Heart right ventricle (tissue), 16 donors: ENCODE measurements at regions of chr17 and their contacts with region 1.

Region 1: DNA sequence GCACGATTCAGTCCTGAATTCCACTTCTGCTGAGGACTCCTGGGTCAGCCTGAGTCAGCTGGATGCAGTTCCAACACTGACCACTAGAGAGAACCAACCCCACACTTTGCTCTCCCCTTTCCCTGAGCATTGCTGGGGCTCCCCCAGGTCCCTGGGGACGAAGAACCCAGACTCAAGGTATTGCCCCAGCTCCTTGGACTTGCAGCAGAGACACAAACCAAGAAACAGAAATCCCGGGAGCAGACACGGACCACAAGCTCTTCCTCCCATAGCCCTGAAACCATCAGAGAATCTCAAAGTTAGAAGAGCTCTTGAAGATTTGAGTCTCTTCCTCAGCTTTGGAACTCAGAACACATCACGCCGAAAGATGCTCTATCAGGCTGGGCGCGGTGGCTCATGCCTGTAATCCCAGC is 678 bp upstream of the GH1 start:
- DNase-seq: peak in 1 of 2 donors; percentile 51
- ATAC-seq: peak; percentile 81 to 91 (median 87)
- H3K4me3 ChIP-seq: no peak overlapping the region
- H3K27ac ChIP-seq: no peak overlapping the region
- H3K4me1 ChIP-seq: peaks cover 0 to 10% (median 0%) of the 10 kb centered on the region in 9 donors
- H3K27me3 ChIP-seq: peaks cover 0 to 6% (median 0%) of the 10 kb centered on the region in 7 donors
- CTCF ChIP-seq: peak; percentile 88 to 97 (median 92)

Region 2: GRCh38 chr17:63931099-63931561 is 11.8 kb after region 1 on chr17:
- intact Hi-C with region 1: no loop called
- DNase-seq: peak; percentile 77 to 84
- ATAC-seq: peak; percentile 85 to 96 (median 89)
- H3K4me3 ChIP-seq: peak overlapping the region in 9 of 10 donors; percentile 13 to 48 (median 39)
- H3K27ac ChIP-seq: peak overlapping the region; percentile 65 to 88 (median 76)
- H3K4me1 ChIP-seq: peaks cover 0 to 30% (median 24%) of the 10 kb centered on the region in 9 donors
- H3K27me3 ChIP-seq: peaks cover 0 to 2% (median 0%) of the 10 kb centered on the region in 7 donors
- CTCF ChIP-seq: no peak

Region 3: GRCh38 chr17:63946440-63947367 is 27.4 kb after region 1 on chr17:
- intact Hi-C with region 1: loop called in 1 of 10 experiments (anchors 2 kb)
- DNase-seq: peak; percentile 35 to 54
- ATAC-seq: peak in 7 of 8 donors; percentile 70 to 81 (median 77)
- H3K4me3 ChIP-seq: no peak overlapping the region
- H3K27ac ChIP-seq: peak overlapping the region in 2 of 10 donors; percentile 29 to 36
- H3K4me1 ChIP-seq: peaks cover 0 to 20% (median 2%) of the 10 kb centered on the region in 9 donors
- H3K27me3 ChIP-seq: peaks cover 0 to 7% (median 0%) of the 10 kb centered on the region in 7 donors
- CTCF ChIP-seq: peak; percentile 64 to 89 (median 83)

Region 4: DNA sequence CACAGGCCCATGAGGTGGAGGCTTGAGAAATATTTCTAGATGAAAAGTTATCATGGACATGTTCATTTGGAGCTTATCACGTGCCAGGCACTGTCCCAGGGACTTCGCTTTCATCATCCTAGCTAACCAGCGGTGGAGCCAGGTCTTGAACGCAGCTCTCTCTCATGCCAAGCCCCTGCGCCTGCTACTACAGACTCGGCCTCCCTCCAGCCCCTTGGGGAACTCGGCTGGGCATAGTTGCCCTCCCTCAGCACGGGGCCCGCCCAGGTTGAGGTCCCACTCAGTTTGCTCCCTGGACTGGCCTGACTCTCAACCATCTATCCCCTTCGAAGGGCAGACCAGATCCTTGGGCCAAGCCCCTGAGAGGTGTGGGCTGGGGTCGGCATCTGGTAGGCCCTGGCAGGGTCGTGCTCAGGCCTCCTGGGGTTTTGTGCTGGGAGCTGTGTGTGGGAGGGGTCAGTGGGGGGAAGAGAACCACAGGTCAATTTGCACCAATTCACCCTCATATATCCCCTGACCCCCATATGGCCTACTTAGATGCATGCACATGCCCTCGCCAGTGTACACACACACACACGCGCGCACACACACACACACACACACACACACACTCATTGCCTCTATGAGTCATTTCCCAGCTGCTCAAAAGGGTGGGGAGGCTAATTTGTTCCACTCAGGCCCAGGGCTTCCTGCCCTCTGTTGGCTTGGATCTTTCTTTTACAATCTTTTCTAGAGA is 65.5 kb after region 1 on chr17:
- intact Hi-C with region 1: loop called in 7 of 10 experiments (anchors 1 to 5 kb)
- DNase-seq: peak; percentile 52 to 76
- ATAC-seq: peak; percentile 65 to 88 (median 81)
- H3K4me3 ChIP-seq: no peak overlapping the region
- H3K27ac ChIP-seq: peak overlapping the region; percentile 44 to 88 (median 78)
- H3K4me1 ChIP-seq: peaks cover 24 to 86% (median 61%) of the 10 kb centered on the region in 9 donors
- H3K27me3 ChIP-seq: peaks cover 0 to 3% (median 0%) of the 10 kb centered on the region in 7 donors
- CTCF ChIP-seq: peak in 1 of 9 donors; percentile 6

Region 5: DNA sequence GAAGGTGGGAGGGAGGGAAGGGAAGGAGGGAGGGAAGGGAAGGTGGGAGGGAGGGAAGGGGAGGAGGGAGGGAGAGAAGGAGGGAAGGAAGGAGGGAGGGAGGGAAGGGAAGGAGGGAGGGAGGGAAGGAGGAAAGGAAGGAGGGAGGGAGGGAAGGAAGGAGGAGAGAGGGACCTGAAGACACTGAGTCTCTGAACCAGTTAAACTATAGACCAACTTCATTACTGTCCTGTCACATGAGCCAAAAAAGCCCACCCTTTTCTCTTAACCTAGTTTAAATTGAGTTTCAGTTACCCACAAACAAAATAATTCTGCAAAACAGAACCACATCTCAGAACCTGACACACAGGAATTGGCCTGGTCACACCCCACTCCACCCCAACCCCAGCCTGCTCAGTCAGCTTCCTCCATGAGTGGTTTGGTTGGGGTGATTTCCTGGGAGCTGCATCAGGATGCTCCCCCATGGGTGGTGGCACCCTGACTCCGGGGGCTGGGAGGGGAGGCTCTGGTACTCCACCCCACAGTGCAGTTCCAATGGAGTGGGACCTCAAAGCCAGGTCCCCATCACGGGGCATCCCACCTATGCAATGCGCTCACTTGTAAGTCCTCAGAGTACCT is 74.2 kb after region 1 on chr17:
- intact Hi-C with region 1: loop called in 7 of 10 experiments (anchors 1 to 5 kb)
- DNase-seq: no peak
- ATAC-seq: no peak
- H3K4me3 ChIP-seq: no peak overlapping the region
- H3K27ac ChIP-seq: no peak overlapping the region
- H3K4me1 ChIP-seq: peaks cover 10 to 47% (median 24%) of the 10 kb centered on the region in 9 donors
- H3K27me3 ChIP-seq: peaks cover 0 to 43% (median 19%) of the 10 kb centered on the region in 7 donors
- CTCF ChIP-seq: no peak

Region 6: GRCh38 chr17:64020056-64020766 is 100.9 kb after region 1 on chr17 and contains the start of gene ICAM2:
- intact Hi-C with region 1: loop called in 9 of 10 experiments (anchors 1 to 10 kb)
- DNase-seq: peak; percentile 63 to 85
- ATAC-seq: peak; percentile 85 to 96 (median 93)
- H3K4me3 ChIP-seq: peak within 1 kb of the TSS; percentile 23 to 70 (median 58)
- H3K27ac ChIP-seq: peak within 1 kb of the TSS; percentile 75 to 97 (median 86)
- H3K4me1 ChIP-seq: peaks cover 0 to 62% (median 26%) of the 10 kb centered on the region in 9 donors
- H3K27me3 ChIP-seq: no peaks in the 10 kb centered on the region
- CTCF ChIP-seq: no peak
- total RNA-seq, gene ICAM2: 25.2 to 70.2 (median 32.4) TPM

Region 7: GRCh38 chr17:64025732-64026294 is 106.5 kb after region 1 on chr17:
- intact Hi-C with region 1: loop called in 9 of 10 experiments (anchors 1 to 10 kb)
- DNase-seq: peak; percentile 80 to 81
- ATAC-seq: peak in 7 of 8 donors; percentile 69 to 85 (median 82)
- H3K4me3 ChIP-seq: peak overlapping the region in 5 of 10 donors; percentile 14 to 32 (median 26)
- H3K27ac ChIP-seq: peak overlapping the region in 7 of 10 donors; percentile 4 to 97 (median 66)
- H3K4me1 ChIP-seq: peaks cover 4 to 31% (median 20%) of the 10 kb centered on the region in 9 donors
- H3K27me3 ChIP-seq: no peaks in the 10 kb centered on the region
- CTCF ChIP-seq: peak; percentile 88 to 97 (median 95)